ENCODE measurements at regions of chr2 and their contacts with region 1.

Region 1: DNA sequence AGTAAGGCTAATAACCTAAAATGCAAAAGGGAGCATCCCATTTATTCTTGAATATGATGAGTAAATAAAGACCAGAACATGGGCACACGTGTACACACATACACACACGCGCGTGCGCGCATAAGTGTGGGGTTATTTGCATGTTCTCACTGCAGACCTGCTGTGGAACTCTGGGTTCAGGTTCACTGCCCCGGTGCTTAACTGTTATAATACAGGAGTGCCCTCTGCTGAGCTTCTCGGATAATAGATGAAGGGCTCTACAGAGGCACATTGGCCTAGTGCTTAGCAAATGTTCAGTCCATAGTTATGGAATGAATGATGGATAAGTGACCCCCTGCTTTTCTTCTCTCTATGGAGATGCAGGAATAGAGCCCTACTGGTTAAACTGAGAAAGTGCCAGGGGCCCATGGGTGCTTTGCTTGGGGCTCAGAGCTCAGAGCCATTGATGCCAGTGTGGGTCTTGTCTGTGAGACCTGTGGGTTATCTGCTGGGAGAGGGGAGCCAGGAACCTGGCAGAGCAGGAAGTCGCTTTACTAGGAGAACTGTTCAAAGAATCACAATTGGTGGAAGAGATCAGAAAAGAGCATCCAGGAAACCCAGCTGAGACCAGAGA is 3.6 kb upstream of the ARL4C start:
- DNase-seq: peak; percentile 45 to 90 (median 76)
- ATAC-seq: peak; percentile 45
- H3K4me3 ChIP-seq: no peak overlapping the region
- H3K4me3 Mint-ChIP-seq: no peak overlapping the region
- H3K27ac ChIP-seq: no peak overlapping the region
- H3K27ac Mint-ChIP-seq: peak overlapping the region; percentile 92
- H3K4me1 ChIP-seq: peaks cover 32% of the 10 kb centered on the region
- H3K4me1 Mint-ChIP-seq: peaks cover 27% of the 10 kb centered on the region
- H3K27me3 ChIP-seq: no peaks in the 10 kb centered on the region
- H3K27me3 Mint-ChIP-seq: no peaks in the 10 kb centered on the region
- CTCF ChIP-seq: peak; percentile 77

Region 2: DNA sequence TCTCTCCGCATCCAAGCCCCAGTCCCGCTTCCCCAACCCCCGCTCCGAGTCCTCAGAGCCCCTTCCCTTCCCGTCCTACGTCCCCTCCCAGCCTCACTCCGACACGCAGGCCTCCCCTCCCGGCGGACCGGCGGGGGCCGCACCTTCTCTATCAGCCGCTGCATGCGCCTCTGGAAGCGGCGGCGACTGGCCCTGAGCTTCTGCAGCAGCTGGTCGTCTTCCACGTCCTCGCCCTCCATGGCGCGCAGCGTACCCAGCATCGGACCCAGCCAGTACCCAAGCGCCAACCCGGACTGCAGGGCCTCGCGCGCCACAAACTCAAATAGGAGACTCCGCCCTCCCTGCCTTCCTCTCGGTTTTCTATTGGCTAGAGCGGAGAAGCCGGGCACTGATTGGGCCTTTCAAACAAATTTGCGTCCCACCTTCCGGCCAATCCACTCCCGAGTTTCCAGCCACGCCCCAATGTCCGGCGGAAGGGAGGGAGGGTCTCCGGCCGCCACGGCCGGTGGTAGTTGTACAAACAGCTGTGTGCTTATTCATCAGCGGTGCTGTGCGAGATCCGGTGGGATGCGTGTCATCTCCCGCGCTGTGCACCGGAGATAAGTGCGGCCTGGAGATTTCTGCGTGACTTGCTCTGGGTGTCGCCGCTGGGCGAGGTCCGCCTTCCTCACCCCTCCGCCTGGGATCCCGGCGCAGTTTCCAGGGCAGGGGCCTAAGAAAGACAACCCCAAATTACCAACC is 646.1 kb before region 1 on chr2 and contains the start of gene HJURP:
- CTCF ChIA-PET with region 1: no interaction called
- POLR2A ChIA-PET with region 1: no interaction called
- intact Hi-C with region 1: loop called (anchors 5 kb)
- DNase-seq: peak; percentile 74 to 93 (median 86)
- ATAC-seq: peak; percentile 96
- H3K4me3 ChIP-seq: peak within 1 kb of the TSS; percentile 66 to 75
- H3K4me3 Mint-ChIP-seq: peak within 1 kb of the TSS; percentile 92
- H3K27ac ChIP-seq: peak within 1 kb of the TSS; percentile 18 to 20
- H3K27ac Mint-ChIP-seq: peak within 1 kb of the TSS; percentile 66
- H3K4me1 ChIP-seq: peaks cover 5% of the 10 kb centered on the region
- H3K4me1 Mint-ChIP-seq: peaks cover 21% of the 10 kb centered on the region
- H3K27me3 ChIP-seq: peaks cover 4% of the 10 kb centered on the region in 2 experiments
- H3K27me3 Mint-ChIP-seq: peaks cover 3% of the 10 kb centered on the region
- CTCF ChIP-seq: no peak
- total RNA-seq, gene HJURP: 0.30 to 0.53 TPM

Region 3: DNA sequence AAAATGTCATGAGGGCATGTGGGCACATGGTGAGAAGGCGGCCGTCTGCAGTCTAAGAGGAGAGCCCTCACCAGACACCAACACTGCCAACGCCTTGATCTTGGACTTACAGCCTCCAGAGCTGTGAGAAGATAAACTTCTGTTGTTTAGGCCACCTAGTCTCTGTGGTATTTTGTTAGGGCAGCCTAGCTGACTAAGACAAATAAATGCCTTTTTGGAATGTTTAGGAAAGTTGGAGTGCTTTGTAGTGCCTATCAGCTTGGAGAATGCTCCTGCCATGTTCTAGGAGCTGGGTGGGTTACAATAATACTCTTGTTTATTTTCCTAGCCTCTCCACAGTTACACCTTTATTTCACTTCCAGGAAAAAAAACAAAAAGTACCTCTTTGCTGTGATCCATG is 358.0 kb before region 1 on chr2:
- CTCF ChIA-PET with region 1: interaction called, 81 read pairs
- POLR2A ChIA-PET with region 1: interaction called, 5 read pairs
- intact Hi-C with region 1: no loop called
- DNase-seq: no peak
- ATAC-seq: no peak
- H3K4me3 ChIP-seq: no peak overlapping the region
- H3K4me3 Mint-ChIP-seq: no peak overlapping the region
- H3K27ac ChIP-seq: no peak overlapping the region
- H3K27ac Mint-ChIP-seq: no peak overlapping the region
- H3K4me1 ChIP-seq: peaks cover 18% of the 10 kb centered on the region
- H3K4me1 Mint-ChIP-seq: peaks cover 19% of the 10 kb centered on the region
- H3K27me3 ChIP-seq: no peaks in the 10 kb centered on the region
- H3K27me3 Mint-ChIP-seq: no peaks in the 10 kb centered on the region
- CTCF ChIP-seq: no peak

Region 4: DNA sequence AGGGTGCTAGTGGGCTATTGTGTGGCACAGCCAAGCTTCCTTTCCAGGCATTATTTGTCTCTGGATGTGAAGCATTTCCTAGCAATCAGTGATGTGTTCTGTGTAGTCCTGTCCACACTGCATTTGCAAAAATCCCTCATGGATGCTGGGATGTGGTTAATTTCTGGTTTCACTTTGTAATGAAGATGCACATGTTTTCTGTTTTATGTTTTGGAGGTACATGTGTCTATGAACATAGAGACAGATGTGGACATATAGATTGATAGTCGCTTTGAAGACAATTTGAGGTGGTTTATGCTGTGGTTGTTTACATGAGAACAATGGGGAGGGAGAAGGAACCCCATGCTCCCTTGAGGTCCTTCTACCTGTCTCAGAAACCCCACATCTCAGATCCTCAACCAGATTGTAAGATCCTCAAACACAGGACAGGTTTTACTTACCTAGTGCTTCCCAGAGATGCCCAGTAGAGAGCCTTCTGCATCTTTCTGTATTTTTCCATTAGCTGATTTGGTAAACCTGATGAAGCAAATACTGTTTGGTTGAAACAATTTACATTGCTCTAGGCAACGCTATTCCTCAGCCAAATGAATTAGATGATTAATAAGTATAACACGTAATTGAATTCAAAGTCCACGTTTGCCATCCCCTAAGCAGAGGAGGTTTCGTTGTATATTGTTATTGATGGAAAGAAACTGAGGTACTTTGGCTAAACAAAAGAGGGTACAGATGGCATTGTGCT is 245.5 kb before region 1 on chr2:
- CTCF ChIA-PET with region 1: no interaction called
- POLR2A ChIA-PET with region 1: no interaction called
- intact Hi-C with region 1: no loop called
- DNase-seq: no peak
- ATAC-seq: no peak
- H3K4me3 ChIP-seq: no peak overlapping the region
- H3K4me3 Mint-ChIP-seq: no peak overlapping the region
- H3K27ac ChIP-seq: no peak overlapping the region
- H3K27ac Mint-ChIP-seq: peak overlapping the region; percentile 58
- H3K4me1 ChIP-seq: no peaks in the 10 kb centered on the region
- H3K4me1 Mint-ChIP-seq: peaks cover 7% of the 10 kb centered on the region
- H3K27me3 ChIP-seq: no peaks in the 10 kb centered on the region
- H3K27me3 Mint-ChIP-seq: no peaks in the 10 kb centered on the region
- CTCF ChIP-seq: no peak

Region 5: GRCh38 chr2:234425619-234426603 is 74.6 kb before region 1 on chr2:
- CTCF ChIA-PET with region 1: interaction called, 50 read pairs
- POLR2A ChIA-PET with region 1: interaction called, 45 read pairs
- intact Hi-C with region 1: loop called in 1 of 2 experiments (anchors 2 kb)
- DNase-seq: peak; percentile 61 to 94 (median 79)
- ATAC-seq: peak; percentile 72
- H3K4me3 ChIP-seq: peak overlapping the region in 1 of 2 experiments; percentile 31
- H3K4me3 Mint-ChIP-seq: peak overlapping the region; percentile 74
- H3K27ac ChIP-seq: peak overlapping the region; percentile 83 to 92
- H3K27ac Mint-ChIP-seq: peak overlapping the region; percentile 100
- H3K4me1 ChIP-seq: peaks cover 85% of the 10 kb centered on the region
- H3K4me1 Mint-ChIP-seq: peaks cover 91% of the 10 kb centered on the region
- H3K27me3 ChIP-seq: no peaks in the 10 kb centered on the region
- H3K27me3 Mint-ChIP-seq: no peaks in the 10 kb centered on the region
- CTCF ChIP-seq: no peak

Region 6: DNA sequence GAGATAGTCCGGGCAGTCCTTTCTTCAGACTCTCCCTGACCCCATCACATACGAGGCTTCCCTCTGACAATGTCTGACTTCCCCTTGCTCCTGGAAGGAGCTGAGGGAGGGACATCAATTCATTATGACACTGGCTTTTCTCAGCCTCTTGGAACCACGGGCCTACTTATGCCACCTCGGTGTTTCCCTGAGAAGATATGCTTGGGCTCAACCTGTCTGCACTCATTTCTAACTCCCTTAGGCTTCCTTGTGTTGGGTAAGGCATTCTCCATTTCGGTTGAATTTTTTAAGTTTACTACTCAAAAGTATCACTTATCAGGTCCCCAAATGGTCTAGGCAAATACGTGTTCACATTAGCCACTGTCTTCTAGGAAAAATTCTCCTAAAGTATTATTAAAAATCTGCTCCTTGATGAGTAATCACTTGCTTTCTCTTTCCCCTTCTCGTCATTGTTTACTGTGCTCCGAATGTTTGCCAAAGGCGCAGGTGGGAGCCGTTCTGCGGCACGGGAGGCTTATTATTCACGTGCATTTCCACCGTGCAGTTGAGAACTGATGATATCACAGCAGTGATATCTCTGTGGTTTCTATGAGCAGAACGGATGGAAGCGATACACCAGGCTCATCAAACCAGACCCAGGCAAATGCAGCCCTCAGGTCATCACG is 36.7 kb before region 1 on chr2:
- CTCF ChIA-PET with region 1: interaction called, 5 read pairs
- POLR2A ChIA-PET with region 1: interaction called, 16 read pairs
- intact Hi-C with region 1: loop called in 1 of 2 experiments (anchors 2 kb)
- DNase-seq: peak; percentile 58 to 92 (median 75)
- ATAC-seq: peak; percentile 87
- H3K4me3 ChIP-seq: peak overlapping the region; percentile 9 to 36
- H3K4me3 Mint-ChIP-seq: peak overlapping the region; percentile 50
- H3K27ac ChIP-seq: peak overlapping the region; percentile 85 to 94
- H3K27ac Mint-ChIP-seq: peak overlapping the region; percentile 94
- H3K4me1 ChIP-seq: peaks cover 63% of the 10 kb centered on the region
- H3K4me1 Mint-ChIP-seq: peaks cover 67% of the 10 kb centered on the region
- H3K27me3 ChIP-seq: no peaks in the 10 kb centered on the region
- H3K27me3 Mint-ChIP-seq: no peaks in the 10 kb centered on the region
- CTCF ChIP-seq: no peak

Region 7: GRCh38 chr2:234544659-234545611 is 44.4 kb after region 1 on chr2:
- CTCF ChIA-PET with region 1: interaction called, 19 read pairs
- POLR2A ChIA-PET with region 1: no interaction called
- intact Hi-C with region 1: loop called in 1 of 2 experiments (anchors 1 kb)
- DNase-seq: peak; percentile 56 to 86 (median 79)
- ATAC-seq: peak; percentile 95
- H3K4me3 ChIP-seq: no peak overlapping the region
- H3K4me3 Mint-ChIP-seq: no peak overlapping the region
- H3K27ac ChIP-seq: no peak overlapping the region
- H3K27ac Mint-ChIP-seq: no peak overlapping the region
- H3K4me1 ChIP-seq: no peaks in the 10 kb centered on the region
- H3K4me1 Mint-ChIP-seq: peaks cover 5% of the 10 kb centered on the region
- H3K27me3 ChIP-seq: no peaks in the 10 kb centered on the region
- H3K27me3 Mint-ChIP-seq: peaks cover 23% of the 10 kb centered on the region
- CTCF ChIP-seq: peak; percentile 83

Measured in CD8-positive, alpha-beta T cell (primary cell).